ENCODE measurements at regions of chr2 and their contacts with region 1.

Region 1: DNA sequence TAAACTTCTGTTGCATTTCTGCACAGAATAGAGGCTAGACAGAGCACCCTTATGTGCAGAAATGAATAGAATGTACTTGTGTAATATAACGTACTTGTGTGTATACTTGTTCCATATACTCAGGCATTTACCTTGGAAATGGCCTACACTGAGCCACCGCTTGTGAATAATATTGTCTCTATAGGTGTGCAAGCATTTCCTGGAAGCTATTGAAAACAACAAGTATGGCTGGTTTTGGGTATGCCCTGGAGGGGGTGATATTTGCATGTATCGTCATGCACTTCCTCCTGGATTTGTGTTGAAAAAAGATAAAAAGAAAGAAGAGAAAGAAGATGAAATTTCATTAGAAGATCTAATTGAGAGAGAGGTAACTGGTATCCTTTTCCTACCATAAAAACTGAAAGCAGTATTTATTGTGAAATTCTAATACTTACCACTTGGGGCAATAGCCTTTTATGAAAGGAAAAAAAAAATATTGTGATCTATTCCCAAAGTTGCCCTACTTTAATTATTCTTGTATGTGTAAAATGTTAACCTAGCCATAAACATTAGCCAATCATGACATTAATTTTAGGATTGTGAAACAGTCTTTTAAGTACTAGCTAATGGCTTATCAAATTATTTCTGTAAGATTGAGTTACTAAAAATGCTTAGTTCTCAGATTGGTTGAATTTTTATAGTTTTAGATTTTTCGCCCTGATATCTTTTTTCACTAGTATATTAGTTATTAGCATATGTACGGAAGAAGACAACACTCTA is 18.0 kb downstream of the ZC3H15 start:
- DNase-seq: peak; percentile 53
- H3K4me3 ChIP-seq: no peak overlapping the region
- H3K27ac ChIP-seq: no peak overlapping the region
- H3K4me1 ChIP-seq: no peaks in the 10 kb centered on the region
- H3K27me3 ChIP-seq: no peaks in the 10 kb centered on the region
- CTCF ChIP-seq: peak; percentile 13 to 17
- POLR2A ChIP-seq: no peak

Region 2: GRCh38 chr2:186544255-186544675 is 40.2 kb after region 1 on chr2:
- CTCF ChIA-PET with region 1: interaction called, 7 read pairs
- POLR2A ChIA-PET with region 1: interaction called, 5 read pairs
- dilution Hi-C with region 1: no loop called
- intact Hi-C with region 1: loop called (anchors 2 kb)
- DNase-seq: peak; percentile 98
- H3K4me3 ChIP-seq: peak overlapping the region in 1 of 3 experiments; percentile 15
- H3K27ac ChIP-seq: peak overlapping the region; percentile 98
- H3K4me1 ChIP-seq: peaks cover 35% of the 10 kb centered on the region
- H3K27me3 ChIP-seq: no peaks in the 10 kb centered on the region
- CTCF ChIP-seq: no peak
- POLR2A ChIP-seq: peak; percentile 31

Region 3: DNA sequence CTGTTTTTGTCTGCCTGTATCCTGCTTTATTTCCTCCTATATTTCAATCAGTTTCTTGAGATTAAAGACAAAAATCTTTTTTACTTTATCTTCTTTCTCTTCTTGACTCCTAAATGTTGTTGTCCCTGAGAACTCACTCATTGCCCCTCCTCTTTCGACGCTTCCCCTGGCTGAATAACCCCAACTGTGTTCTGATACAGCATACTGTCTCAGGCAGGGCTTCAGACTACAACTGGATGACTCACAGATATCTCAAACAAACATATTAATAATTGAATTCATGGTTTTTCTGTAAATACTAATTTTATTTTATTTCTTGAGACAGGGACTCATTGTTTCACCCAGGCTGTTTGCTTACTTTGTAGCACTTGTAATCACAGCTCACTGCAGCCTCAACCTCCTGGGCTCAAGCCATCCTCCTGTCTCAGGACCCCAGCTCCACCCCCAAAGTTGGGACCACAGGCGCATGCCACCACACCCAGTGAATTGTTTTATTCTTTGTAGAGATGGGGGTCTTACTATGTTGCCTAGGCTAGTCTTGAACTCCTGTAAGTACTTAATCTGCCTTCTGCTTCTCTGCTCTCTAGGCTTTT is 95.3 kb after region 1 on chr2:
- CTCF ChIA-PET with region 1: interaction called, 13 read pairs
- POLR2A ChIA-PET with region 1: no interaction called
- dilution Hi-C with region 1: no loop called
- intact Hi-C with region 1: no loop called
- DNase-seq: peak; percentile 65
- H3K4me3 ChIP-seq: no peak overlapping the region
- H3K27ac ChIP-seq: no peak overlapping the region
- H3K4me1 ChIP-seq: peaks cover 25% of the 10 kb centered on the region
- H3K27me3 ChIP-seq: no peaks in the 10 kb centered on the region
- CTCF ChIP-seq: no peak
- POLR2A ChIP-seq: no peak

Region 4: GRCh38 chr2:186641807-186642321 is 137.8 kb after region 1 on chr2:
- CTCF ChIA-PET with region 1: interaction called, 188 read pairs
- POLR2A ChIA-PET with region 1: no interaction called
- dilution Hi-C with region 1: no loop called
- intact Hi-C with region 1: loop called (anchors 1 kb)
- DNase-seq: peak; percentile 84
- H3K4me3 ChIP-seq: no peak overlapping the region
- H3K27ac ChIP-seq: no peak overlapping the region
- H3K4me1 ChIP-seq: no peaks in the 10 kb centered on the region
- H3K27me3 ChIP-seq: no peaks in the 10 kb centered on the region
- CTCF ChIP-seq: peak; percentile 59
- POLR2A ChIP-seq: no peak

Region 5: DNA sequence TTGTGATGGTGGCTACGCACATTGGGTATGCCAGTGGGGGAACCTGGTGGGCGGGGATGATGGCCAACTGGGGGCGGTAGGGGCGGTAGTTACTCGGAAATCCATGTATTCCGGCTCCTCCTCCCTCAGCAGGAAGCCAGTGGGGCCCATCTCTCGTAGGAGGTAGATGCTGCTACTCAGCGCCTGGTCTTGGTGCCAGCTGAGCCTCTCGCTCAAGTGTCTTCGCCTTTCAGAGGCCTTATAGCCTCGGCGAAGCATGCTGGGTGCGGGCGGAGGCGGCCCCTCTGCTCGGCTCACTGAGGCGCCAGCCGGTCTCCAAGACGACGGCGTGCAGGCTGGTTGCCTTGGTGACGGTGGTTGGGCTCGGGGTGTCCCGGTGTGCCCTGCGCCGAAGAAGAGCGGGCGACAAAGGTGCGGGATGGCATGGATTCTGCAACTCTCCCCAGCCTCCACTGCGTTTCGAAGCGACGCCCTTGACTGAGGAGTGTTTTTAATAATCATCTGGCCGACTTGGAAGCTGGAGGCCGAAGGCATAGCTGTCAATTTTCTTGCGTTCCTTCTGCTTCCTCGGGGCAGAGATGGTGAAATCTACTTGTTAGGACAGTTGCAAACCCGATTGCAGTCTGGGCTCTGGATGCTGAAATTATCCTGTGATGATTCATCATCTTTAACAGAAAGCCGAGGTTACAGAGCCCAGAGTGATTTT is 345.0 kb after region 1 on chr2 and contains the start of gene ZSWIM2:
- CTCF ChIA-PET with region 1: no interaction called
- POLR2A ChIA-PET with region 1: no interaction called
- dilution Hi-C with region 1: no loop called
- intact Hi-C with region 1: loop called (anchors 10 kb)
- DNase-seq: peak; percentile 54
- H3K4me3 ChIP-seq: peak within 1 kb of the TSS; percentile 31 to 42 (median 41)
- H3K27ac ChIP-seq: no peak within 1 kb of the TSS
- H3K4me1 ChIP-seq: peaks cover 16% of the 10 kb centered on the region
- H3K27me3 ChIP-seq: no peaks in the 10 kb centered on the region
- CTCF ChIP-seq: peak in 1 of 2 donors; percentile 1
- POLR2A ChIP-seq: no peak
- total RNA-seq, gene ZSWIM2: not detected in 2 replicates

Measured in endothelial cell of umbilical vein (primary cell).